MCF 10A (cell line): ENCODE measurements at regions of chrX and their contacts with region 1.

Region 1: GRCh38 chrX:15471016-15471415 is 22.1 kb downstream of the PIR start:
- DNase-seq: peak; percentile 80
- H3K4me3 Mint-ChIP-seq: no peak overlapping the region
- H3K27ac Mint-ChIP-seq: no peak overlapping the region
- H3K4me1 Mint-ChIP-seq: peaks cover 22% of the 10 kb centered on the region
- H3K27me3 Mint-ChIP-seq: peaks cover under 1% of the 10 kb centered on the region
- CTCF ChIP-seq: peak; percentile 76

Region 2: GRCh38 chrX:15335135-15336022 is 135.6 kb before region 1 on chrX and contains the start of gene PIGA:
- CTCF ChIA-PET with region 1: interaction called, 12 read pairs
- POLR2A ChIA-PET with region 1: interaction called, 8 read pairs
- intact Hi-C with region 1: no loop called
- DNase-seq: peak; percentile 94
- H3K4me3 Mint-ChIP-seq: peak within 1 kb of the TSS; percentile 80
- H3K27ac Mint-ChIP-seq: peak within 1 kb of the TSS; percentile 88
- H3K4me1 Mint-ChIP-seq: peaks cover 5% of the 10 kb centered on the region
- H3K27me3 Mint-ChIP-seq: peaks cover 45% of the 10 kb centered on the region
- CTCF ChIP-seq: no peak
- total RNA-seq, gene PIGA: 17.3 and 22.7 TPM in 2 replicates

Region 3: GRCh38 chrX:15366506-15367352 is 104.3 kb before region 1 on chrX:
- CTCF ChIA-PET with region 1: interaction called, 10 read pairs
- POLR2A ChIA-PET with region 1: no interaction called
- intact Hi-C with region 1: no loop called
- DNase-seq: no peak
- H3K4me3 Mint-ChIP-seq: no peak overlapping the region
- H3K27ac Mint-ChIP-seq: no peak overlapping the region
- H3K4me1 Mint-ChIP-seq: no peaks in the 10 kb centered on the region
- H3K27me3 Mint-ChIP-seq: peaks cover 82% of the 10 kb centered on the region
- CTCF ChIP-seq: no peak

Region 4: GRCh38 chrX:15493118-15493962 is 22.3 kb after region 1 on chrX and contains the start of gene PIR:
- CTCF ChIA-PET with region 1: interaction called, 127 read pairs
- POLR2A ChIA-PET with region 1: interaction called, 54 read pairs
- intact Hi-C with region 1: loop called (anchors 1 kb)
- DNase-seq: peak; percentile 96
- H3K4me3 Mint-ChIP-seq: peak within 1 kb of the TSS; percentile 76
- H3K27ac Mint-ChIP-seq: peak within 1 kb of the TSS; percentile 88
- H3K4me1 Mint-ChIP-seq: peaks cover 8% of the 10 kb centered on the region
- H3K27me3 Mint-ChIP-seq: no peaks in the 10 kb centered on the region
- CTCF ChIP-seq: peak; percentile 34
- total RNA-seq, gene PIR: 8.2 and 10.3 TPM in 2 replicates

Region 5: GRCh38 chrX:15511563-15511962 is 40.5 kb after region 1 on chrX:
- CTCF ChIA-PET with region 1: interaction called, 11 read pairs
- POLR2A ChIA-PET with region 1: no interaction called
- intact Hi-C with region 1: no loop called
- DNase-seq: no peak
- H3K4me3 Mint-ChIP-seq: no peak overlapping the region
- H3K27ac Mint-ChIP-seq: no peak overlapping the region
- H3K4me1 Mint-ChIP-seq: no peaks in the 10 kb centered on the region
- H3K27me3 Mint-ChIP-seq: peaks cover 25% of the 10 kb centered on the region
- CTCF ChIP-seq: no peak

Region 6: GRCh38 chrX:15674841-15675489 is 203.9 kb after region 1 on chrX:
- CTCF ChIA-PET with region 1: interaction called, 4 read pairs
- POLR2A ChIA-PET with region 1: interaction called, 4 read pairs
- intact Hi-C with region 1: loop called (anchors 5 kb)
- DNase-seq: peak; percentile 98
- H3K4me3 Mint-ChIP-seq: no peak overlapping the region
- H3K27ac Mint-ChIP-seq: no peak overlapping the region
- H3K4me1 Mint-ChIP-seq: peaks cover 16% of the 10 kb centered on the region
- H3K27me3 Mint-ChIP-seq: peaks cover 17% of the 10 kb centered on the region
- CTCF ChIP-seq: no peak